ENCODE measurements at regions of chr16 and their contacts with region 1.

Region 1: DNA sequence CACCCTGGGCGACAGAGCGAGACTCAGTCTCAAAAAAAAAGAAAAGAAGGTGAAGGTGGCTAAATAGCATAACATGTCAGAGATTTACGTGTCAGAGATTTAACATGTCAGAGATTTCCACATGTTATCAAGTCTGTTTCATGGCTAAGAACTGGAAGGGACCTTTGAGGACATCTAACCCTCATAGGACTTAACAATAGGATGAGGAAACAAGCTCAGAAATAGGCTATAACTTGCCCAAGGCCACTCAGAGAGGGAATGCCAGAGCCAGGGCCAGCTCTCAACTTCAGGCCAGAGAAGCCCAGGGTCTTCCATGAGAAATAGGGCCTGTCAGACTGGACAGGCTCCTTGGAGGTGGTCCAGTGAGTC is 26.8 kb upstream of the ZNF629 start:
- DNase-seq: no peak

Region 2: DNA sequence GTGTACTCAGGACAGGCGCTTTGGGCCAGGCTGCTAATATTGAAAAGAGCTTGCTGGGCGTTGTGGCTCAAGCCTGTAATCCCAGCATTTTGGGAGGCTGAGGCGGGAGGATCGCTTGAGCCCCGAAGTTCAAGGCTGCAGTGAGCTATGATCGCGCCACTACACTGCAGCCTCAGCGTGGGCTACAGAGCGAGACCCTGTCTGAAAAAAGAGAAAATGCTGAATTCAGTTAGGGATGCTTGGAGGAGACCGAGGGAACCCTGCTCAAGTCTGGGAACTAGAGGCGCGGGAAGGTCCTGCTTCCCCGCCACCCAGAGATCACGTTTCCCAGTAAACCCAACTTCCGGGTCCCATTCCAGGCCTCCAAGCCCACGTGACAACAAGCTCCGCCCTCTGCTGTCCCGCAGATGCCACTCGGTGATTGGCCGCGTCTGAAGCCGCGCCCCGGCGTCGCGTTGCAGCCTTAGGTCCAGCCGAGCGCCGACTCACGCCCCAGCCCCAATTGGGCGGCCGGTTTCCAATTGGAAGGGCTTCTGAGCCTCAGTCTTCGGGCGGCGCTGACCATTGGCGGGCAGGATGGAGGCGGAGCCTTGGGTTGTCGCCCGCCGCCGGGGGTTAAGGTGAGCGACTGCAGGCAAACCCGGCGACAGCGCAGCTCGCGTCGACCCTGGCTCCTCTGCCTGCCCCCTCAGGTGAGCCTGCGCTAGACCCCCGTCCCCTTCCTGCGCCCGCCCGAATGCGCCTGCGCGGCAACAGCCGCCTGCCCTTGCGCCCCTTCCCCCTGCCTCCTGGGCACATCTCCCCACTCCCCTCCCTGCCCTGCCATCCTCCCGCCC is 65.8 kb before region 1 on chr16 and contains the start of gene PHKG2:
- intact Hi-C with region 1: loop called in 1 of 2 experiments (anchors 10 kb)
- DNase-seq: peak; percentile 100
- total RNA-seq, gene PHKG2: 13.0 to 13.9 TPM